ENCODE measurements at regions of chr13 and their contacts with region 1.

Region 1: GRCh38 chr13:95536632-95537241 is 15.8 kb upstream of the CLDN10 start:
- DNase-seq: no peak
- ATAC-seq: no peak
- H3K4me3 ChIP-seq: no peak overlapping the region
- H3K27ac ChIP-seq: no peak overlapping the region
- H3K4me1 ChIP-seq: peaks cover 0 to 18% (median 11%) of the 10 kb centered on the region in 9 donors
- H3K27me3 ChIP-seq: peaks cover 0 to 3% (median 0%) of the 10 kb centered on the region in 7 donors
- CTCF ChIP-seq: peak in 8 of 9 donors; percentile 17 to 62 (median 50)

Region 2: GRCh38 chr13:95494082-95494681 is 42.6 kb before region 1 on chr13:
- intact Hi-C with region 1: loop called in 1 of 10 experiments (anchors 5 kb)
- DNase-seq: peak in 1 of 2 donors; percentile 16
- ATAC-seq: no peak
- H3K4me3 ChIP-seq: no peak overlapping the region
- H3K27ac ChIP-seq: no peak overlapping the region
- H3K4me1 ChIP-seq: peaks cover 0 to 16% (median 0%) of the 10 kb centered on the region in 9 donors
- H3K27me3 ChIP-seq: no peaks in the 10 kb centered on the region
- CTCF ChIP-seq: peak; percentile 17 to 76 (median 69)

Region 3: GRCh38 chr13:95624020-95624419 is 87.3 kb after region 1 on chr13:
- intact Hi-C with region 1: loop called in 1 of 10 experiments (anchors 5 kb)
- DNase-seq: no peak
- ATAC-seq: peak in 2 of 8 donors; percentile 35 to 61
- H3K4me3 ChIP-seq: no peak overlapping the region
- H3K27ac ChIP-seq: no peak overlapping the region
- H3K4me1 ChIP-seq: peaks cover 0 to 12% (median 6%) of the 10 kb centered on the region in 9 donors
- H3K27me3 ChIP-seq: no peaks in the 10 kb centered on the region
- CTCF ChIP-seq: peak; percentile 50 to 77 (median 67)